ENCODE measurements at regions of chr11 and their contacts with region 1.

Region 1: DNA sequence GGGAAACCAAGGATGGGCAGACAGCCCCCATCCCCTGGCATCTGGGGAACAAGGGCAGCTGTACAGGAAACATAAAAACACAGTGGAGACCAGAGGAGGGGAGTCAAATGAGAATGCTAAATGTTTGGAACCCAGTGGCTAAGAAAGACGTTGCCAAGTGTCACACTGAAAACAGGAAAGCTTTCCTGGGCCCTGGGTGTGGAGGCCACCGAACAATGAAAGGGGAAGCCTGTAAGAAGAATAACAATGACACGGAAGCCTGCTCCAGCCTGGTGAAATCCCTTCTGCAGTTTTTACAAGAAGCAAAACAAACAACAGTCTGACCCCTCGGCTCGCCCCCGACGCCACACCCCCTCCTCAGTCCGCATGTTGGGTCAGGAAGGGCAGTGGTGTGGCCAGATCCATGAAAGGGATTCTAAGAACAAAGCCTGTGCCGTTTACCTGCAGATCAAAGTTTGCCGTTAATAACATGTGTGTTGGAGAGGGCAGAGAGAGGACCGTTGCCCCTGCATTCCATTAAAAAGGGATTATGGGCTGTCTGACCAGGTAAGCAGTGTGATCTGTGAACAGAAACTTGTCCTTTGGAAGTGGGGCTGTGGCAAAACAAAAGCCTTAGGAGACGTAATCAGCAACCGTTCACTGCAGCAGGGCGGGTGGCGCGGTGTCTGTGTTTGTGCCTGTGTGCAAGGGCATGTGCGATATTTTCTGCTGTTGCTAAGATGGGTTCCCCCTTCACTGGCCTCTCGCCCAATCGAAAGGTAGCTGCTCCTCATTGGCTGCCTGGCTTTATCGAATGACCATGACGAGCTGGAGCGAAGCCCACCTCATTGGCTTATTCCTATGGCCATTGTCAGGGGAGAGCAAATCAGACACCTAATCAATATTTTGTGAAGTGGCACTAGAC is 113.7 kb upstream of the BLID start:
- DNase-seq: no peak
- ATAC-seq: no peak
- H3K4me3 Mint-ChIP-seq: no peak overlapping the region
- H3K27ac Mint-ChIP-seq: no peak overlapping the region
- H3K4me1 Mint-ChIP-seq: no peaks in the 10 kb centered on the region
- H3K27me3 Mint-ChIP-seq: peaks cover 16% of the 10 kb centered on the region

Region 2: GRCh38 chr11:122108192-122108799 is 121.4 kb before region 1 on chr11:
- CTCF ChIA-PET with region 1: no interaction called
- POLR2A ChIA-PET with region 1: no interaction called
- intact Hi-C with region 1: no loop called
- DNase-seq: peak; percentile 38
- ATAC-seq: no peak
- H3K4me3 Mint-ChIP-seq: no peak overlapping the region
- H3K27ac Mint-ChIP-seq: no peak overlapping the region
- H3K4me1 Mint-ChIP-seq: no peaks in the 10 kb centered on the region
- H3K27me3 Mint-ChIP-seq: peaks cover 12% of the 10 kb centered on the region

Region 3: GRCh38 chr11:122179961-122180834 is 49.5 kb before region 1 on chr11:
- CTCF ChIA-PET with region 1: interaction called, 3 read pairs
- POLR2A ChIA-PET with region 1: no interaction called
- intact Hi-C with region 1: loop called in 1 of 2 experiments (anchors 5 kb)
- DNase-seq: no peak
- ATAC-seq: no peak
- H3K4me3 Mint-ChIP-seq: no peak overlapping the region
- H3K27ac Mint-ChIP-seq: no peak overlapping the region
- H3K4me1 Mint-ChIP-seq: no peaks in the 10 kb centered on the region
- H3K27me3 Mint-ChIP-seq: peaks cover 16% of the 10 kb centered on the region

Measured in activated CD4-positive, alpha-beta T cell treated with anti-CD3 and anti-CD28 coated beads for 36 hours (primary cell).